B cell (primary cell): ENCODE measurements at regions of chr19 and their contacts with region 1.

Region 1: GRCh38 chr19:41945135-41945766 is 13.9 kb downstream of the RABAC1 start:
- DNase-seq: peak; percentile 97
- ATAC-seq: peak; percentile 87
- H3K4me3 ChIP-seq: peak overlapping the region in 1 of 5 experiments; percentile 23
- H3K4me3 Mint-ChIP-seq: peak overlapping the region; percentile 81
- H3K27ac ChIP-seq: peak overlapping the region; percentile 94 to 96
- H3K27ac Mint-ChIP-seq: peak overlapping the region; percentile 100
- H3K4me1 ChIP-seq: peaks cover 57 to 71% of the 10 kb centered on the region in 2 donors
- H3K4me1 Mint-ChIP-seq: peaks cover 71% of the 10 kb centered on the region
- H3K27me3 ChIP-seq: no peaks in the 10 kb centered on the region
- H3K27me3 Mint-ChIP-seq: no peaks in the 10 kb centered on the region
- CTCF ChIP-seq: no peak

Region 2: DNA sequence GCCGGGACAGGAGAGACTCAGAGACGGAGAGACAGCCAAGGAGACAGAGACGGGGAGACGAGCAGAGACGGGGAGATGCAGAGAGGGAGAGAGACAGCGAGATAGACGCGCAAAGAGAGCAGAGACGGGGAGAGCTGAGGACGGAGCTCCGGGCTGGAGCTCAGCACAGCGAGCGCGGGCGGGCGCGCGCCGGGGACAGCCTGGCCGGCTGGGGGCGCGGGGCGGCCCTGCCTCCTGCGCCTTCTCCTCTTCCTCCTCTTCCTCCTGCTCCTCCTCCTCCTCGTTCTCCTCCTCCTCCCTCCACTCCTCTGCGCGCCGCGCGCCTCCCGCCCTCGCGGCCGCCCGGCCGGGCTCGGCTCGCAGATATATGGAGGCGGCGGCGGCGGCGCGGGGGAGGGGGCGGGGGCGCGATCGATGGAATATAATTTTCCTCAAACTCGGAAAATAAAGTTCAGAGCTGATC is 17.0 kb before region 1 on chr19 and contains the start of gene ERFL:
- CTCF ChIA-PET with region 1: interaction called, 54 read pairs
- POLR2A ChIA-PET with region 1: interaction called, 17 read pairs
- intact Hi-C with region 1: loop called (anchors 2 kb)
- DNase-seq: peak; percentile 59
- ATAC-seq: peak; percentile 31
- H3K4me3 ChIP-seq: peak within 1 kb of the TSS; percentile 49 to 72 (median 60)
- H3K4me3 Mint-ChIP-seq: no peak within 1 kb of the TSS
- H3K27ac ChIP-seq: peak within 1 kb of the TSS; percentile 18 to 56
- H3K27ac Mint-ChIP-seq: peak within 1 kb of the TSS; percentile 87
- H3K4me1 ChIP-seq: peaks cover 52 to 60% of the 10 kb centered on the region in 2 donors
- H3K4me1 Mint-ChIP-seq: peaks cover 32% of the 10 kb centered on the region
- H3K27me3 ChIP-seq: peaks cover 0 to 36% (median 7%) of the 10 kb centered on the region in 4 experiments
- H3K27me3 Mint-ChIP-seq: peaks cover 7% of the 10 kb centered on the region
- CTCF ChIP-seq: no peak
- total RNA-seq, gene ERFL: 2.3 and 2.4 TPM in 2 replicates

Region 3: GRCh38 chr19:41934849-41935374 is 10.3 kb before region 1 on chr19:
- CTCF ChIA-PET with region 1: interaction called, 54 read pairs
- POLR2A ChIA-PET with region 1: interaction called, 17 read pairs
- intact Hi-C with region 1: no loop called
- DNase-seq: peak; percentile 88
- ATAC-seq: peak; percentile 84
- H3K4me3 ChIP-seq: no peak overlapping the region
- H3K4me3 Mint-ChIP-seq: peak overlapping the region; percentile 33
- H3K27ac ChIP-seq: peak overlapping the region in 1 of 2 donors; percentile 55
- H3K27ac Mint-ChIP-seq: peak overlapping the region; percentile 86
- H3K4me1 ChIP-seq: peaks cover 42 to 69% of the 10 kb centered on the region in 2 donors
- H3K4me1 Mint-ChIP-seq: peaks cover 53% of the 10 kb centered on the region
- H3K27me3 ChIP-seq: peaks cover 0 to 10% (median 0%) of the 10 kb centered on the region in 4 experiments
- H3K27me3 Mint-ChIP-seq: no peaks in the 10 kb centered on the region
- CTCF ChIP-seq: peak; percentile 89